AG04450 (cell line): ENCODE measurements at regions of chr13 and their contacts with region 1.

Region 1: GRCh38 chr13:77480066-77480465 is 55.4 kb upstream of the SCEL start:
- DNase-seq: no peak
- H3K4me3 ChIP-seq: no peak overlapping the region
- H3K27ac ChIP-seq: no peak overlapping the region
- H3K27me3 ChIP-seq: peaks cover 3% of the 10 kb centered on the region
- CTCF ChIP-seq: no peak

Region 2: GRCh38 chr13:77065461-77066147 is 414.5 kb before region 1 on chr13:
- CTCF ChIA-PET with region 1: interaction called, 11 read pairs
- POLR2A ChIA-PET with region 1: no interaction called
- DNase-seq: no peak
- H3K4me3 ChIP-seq: no peak overlapping the region
- H3K27ac ChIP-seq: no peak overlapping the region
- H3K27me3 ChIP-seq: no peaks in the 10 kb centered on the region
- CTCF ChIP-seq: no peak

Region 3: DNA sequence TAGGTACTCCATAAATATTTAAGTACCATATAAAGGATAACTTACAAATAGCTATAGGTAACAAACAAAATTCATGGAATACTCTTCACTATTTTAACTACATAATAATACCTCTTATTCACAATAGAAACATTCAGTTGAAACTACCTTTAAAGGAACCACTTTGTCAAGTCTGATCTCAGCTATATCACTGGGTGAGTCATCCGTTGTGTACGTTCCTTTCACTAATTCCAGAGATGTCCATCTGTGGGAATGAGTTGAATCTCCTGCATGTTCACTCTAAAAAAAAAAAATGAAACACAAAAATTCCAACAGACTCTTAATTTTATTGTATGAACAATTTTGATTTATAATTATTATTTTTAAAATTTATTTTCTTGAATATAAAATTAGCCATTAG is 303.7 kb before region 1 on chr13:
- CTCF ChIA-PET with region 1: interaction called, 10 read pairs
- POLR2A ChIA-PET with region 1: no interaction called
- DNase-seq: peak; percentile 42
- H3K4me3 ChIP-seq: no peak overlapping the region
- H3K27ac ChIP-seq: no peak overlapping the region
- H3K27me3 ChIP-seq: no peaks in the 10 kb centered on the region
- CTCF ChIP-seq: no peak

Region 4: DNA sequence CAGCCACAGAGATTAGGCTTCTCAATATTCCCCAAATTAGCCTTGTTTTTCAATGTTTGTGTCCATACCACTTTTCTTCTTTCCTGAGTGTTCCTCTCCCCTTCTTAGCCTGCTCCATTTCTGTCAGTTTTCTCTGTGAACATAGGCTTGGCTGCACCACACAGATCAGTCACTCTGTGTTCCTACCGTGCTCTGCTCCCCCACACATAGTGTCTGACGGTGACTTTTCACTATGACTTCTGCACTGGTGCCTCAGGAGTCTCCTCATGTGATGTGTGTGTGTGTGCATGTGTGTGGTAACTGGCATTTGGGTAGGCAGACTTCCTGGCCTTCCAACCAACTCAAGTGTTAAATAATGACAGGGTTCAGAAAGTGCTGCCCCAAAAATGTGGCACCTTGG is 105.3 kb before region 1 on chr13:
- CTCF ChIA-PET with region 1: no interaction called
- POLR2A ChIA-PET with region 1: no interaction called
- DNase-seq: no peak
- H3K4me3 ChIP-seq: no peak overlapping the region
- H3K27ac ChIP-seq: no peak overlapping the region
- H3K27me3 ChIP-seq: peaks cover 3% of the 10 kb centered on the region
- CTCF ChIP-seq: no peak

Region 5: DNA sequence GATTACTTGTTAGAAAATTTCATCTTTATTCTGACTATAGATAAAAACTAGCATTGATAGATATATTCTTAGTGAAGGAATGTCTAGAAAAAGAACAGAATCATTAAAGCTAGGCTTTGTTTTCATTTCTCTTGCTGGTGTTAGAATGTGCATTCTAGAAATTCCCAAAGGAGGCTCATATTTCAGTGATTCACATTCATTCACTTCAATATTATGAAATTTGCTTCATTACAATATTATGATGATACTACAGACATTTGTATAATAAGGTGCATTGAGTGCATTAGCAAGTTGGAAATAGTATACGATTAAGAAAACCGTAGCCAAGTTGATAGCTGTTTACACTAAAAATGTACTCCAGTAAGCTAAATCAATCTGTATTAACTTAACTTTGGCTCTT is 82.4 kb before region 1 on chr13:
- CTCF ChIA-PET with region 1: interaction called, 10 read pairs
- POLR2A ChIA-PET with region 1: no interaction called
- DNase-seq: no peak
- H3K4me3 ChIP-seq: no peak overlapping the region
- H3K27ac ChIP-seq: no peak overlapping the region
- H3K27me3 ChIP-seq: no peaks in the 10 kb centered on the region
- CTCF ChIP-seq: no peak

Region 6: GRCh38 chr13:77465603-77466205 is 14.4 kb before region 1 on chr13:
- CTCF ChIA-PET with region 1: interaction called, 26 read pairs
- POLR2A ChIA-PET with region 1: no interaction called
- DNase-seq: no peak
- H3K4me3 ChIP-seq: no peak overlapping the region
- H3K27ac ChIP-seq: no peak overlapping the region
- H3K27me3 ChIP-seq: no peaks in the 10 kb centered on the region
- CTCF ChIP-seq: no peak

Region 7: DNA sequence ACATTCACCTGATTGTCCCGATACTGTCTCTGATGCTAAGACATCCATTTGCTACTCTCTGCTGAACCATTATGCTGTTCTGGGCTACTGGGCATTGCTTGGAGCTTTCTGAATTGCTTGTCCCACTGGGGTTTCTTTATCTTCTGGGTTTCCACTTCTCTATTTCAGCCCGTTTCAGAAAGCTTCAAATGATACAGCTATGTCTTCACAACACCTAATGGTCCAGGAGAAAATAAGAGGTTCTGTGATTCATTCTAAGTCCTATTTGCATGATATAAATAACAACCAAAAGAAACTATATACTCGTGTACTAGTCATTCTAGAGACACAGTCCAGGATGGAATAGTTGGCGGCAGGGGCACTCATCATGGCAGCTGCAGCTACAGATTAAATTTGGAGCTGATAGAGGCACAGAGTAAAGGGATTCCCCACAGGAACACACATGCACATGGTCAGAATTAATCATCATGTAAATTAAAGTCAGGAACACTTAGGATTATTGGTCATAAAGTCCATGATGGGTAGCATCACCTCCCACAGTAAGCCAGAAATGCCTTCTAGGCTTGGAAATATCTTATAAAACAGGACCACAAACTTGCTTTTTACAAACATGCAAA is 22.1 kb after region 1 on chr13:
- CTCF ChIA-PET with region 1: interaction called, 16 read pairs
- POLR2A ChIA-PET with region 1: no interaction called
- DNase-seq: no peak
- H3K4me3 ChIP-seq: no peak overlapping the region
- H3K27ac ChIP-seq: no peak overlapping the region
- H3K27me3 ChIP-seq: no peaks in the 10 kb centered on the region
- CTCF ChIP-seq: no peak

Region 8: DNA sequence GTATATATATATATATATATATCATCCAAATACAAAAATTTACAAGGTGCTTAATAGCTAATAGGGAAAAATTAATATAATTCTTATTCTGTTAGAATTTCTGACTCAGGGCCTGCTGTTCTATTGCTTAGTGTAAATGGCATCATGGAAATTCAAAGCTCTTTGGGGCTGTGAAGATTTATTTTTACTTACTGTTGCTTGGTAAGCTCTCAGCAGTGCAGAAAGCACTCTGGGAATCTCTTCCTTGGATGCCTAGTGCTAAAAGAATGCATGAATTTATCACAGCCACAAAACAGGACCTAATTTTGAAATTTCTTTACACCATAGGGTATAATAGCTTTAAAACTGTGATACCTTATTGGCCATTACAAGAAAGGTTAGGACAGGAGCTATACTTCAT is 148.1 kb after region 1 on chr13:
- CTCF ChIA-PET with region 1: no interaction called
- POLR2A ChIA-PET with region 1: no interaction called
- DNase-seq: no peak
- H3K4me3 ChIP-seq: no peak overlapping the region
- H3K27ac ChIP-seq: no peak overlapping the region
- H3K27me3 ChIP-seq: no peaks in the 10 kb centered on the region
- CTCF ChIP-seq: no peak

Region 9: DNA sequence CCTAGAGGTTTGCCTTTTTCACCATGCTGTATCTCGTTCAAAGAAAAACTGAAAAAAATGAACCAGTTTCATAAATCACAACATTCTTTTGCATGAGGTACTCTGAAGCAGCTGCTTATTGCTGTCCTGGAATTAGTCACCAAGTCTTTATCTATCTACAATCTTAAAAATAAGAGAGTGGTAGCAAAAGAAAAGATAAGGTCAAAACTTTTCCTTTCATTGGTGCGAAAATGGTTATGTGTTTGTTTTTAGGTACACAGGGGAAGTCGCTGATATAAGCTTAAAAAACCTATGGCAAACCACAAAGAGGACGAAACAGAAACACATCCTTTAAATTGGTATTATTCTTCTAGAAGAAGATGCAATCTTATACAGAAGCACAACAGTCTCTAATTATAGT is 1158.2 kb after region 1 on chr13:
- CTCF ChIA-PET with region 1: no interaction called
- POLR2A ChIA-PET with region 1: no interaction called
- DNase-seq: no peak
- H3K4me3 ChIP-seq: no peak overlapping the region
- H3K27ac ChIP-seq: no peak overlapping the region
- H3K27me3 ChIP-seq: no peaks in the 10 kb centered on the region
- CTCF ChIP-seq: no peak

Region 10: DNA sequence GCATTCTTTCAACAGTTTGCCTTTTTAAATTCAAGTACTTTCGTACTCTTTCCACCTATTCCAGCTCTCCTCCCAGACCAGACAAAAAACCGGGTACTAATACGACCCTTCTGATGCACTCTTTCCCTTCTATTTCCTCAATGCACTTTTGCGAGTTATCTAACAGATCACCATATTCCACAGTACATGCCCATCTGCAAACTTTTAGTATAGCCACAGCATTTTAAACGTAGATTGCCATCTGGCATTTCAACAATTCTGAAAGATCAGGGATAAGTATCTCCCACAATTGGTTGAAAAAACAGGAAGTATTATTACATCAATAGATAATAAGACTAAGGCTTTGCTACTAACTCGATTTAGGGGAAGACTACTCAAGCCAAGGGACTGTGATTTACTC is 1894.5 kb after region 1 on chr13:
- CTCF ChIA-PET with region 1: no interaction called
- POLR2A ChIA-PET with region 1: no interaction called
- DNase-seq: no peak
- H3K4me3 ChIP-seq: no peak overlapping the region
- H3K27ac ChIP-seq: no peak overlapping the region
- H3K27me3 ChIP-seq: no peaks in the 10 kb centered on the region
- CTCF ChIP-seq: no peak